Colonic mucosa (tissue), 4 donors: ENCODE measurements at regions of chr17 and their contacts with region 1.

Region 1: GRCh38 chr17:51914577-51914976 is 243.9 kb downstream of the CA10 start:
- DNase-seq: no peak
- H3K4me3 ChIP-seq: no peak overlapping the region
- H3K27ac ChIP-seq: no peak overlapping the region
- H3K4me1 ChIP-seq: no peaks in the 10 kb centered on the region
- H3K27me3 ChIP-seq: no peaks in the 10 kb centered on the region
- CTCF ChIP-seq: no peak

Region 2: GRCh38 chr17:51647826-51648225 is 266.8 kb before region 1 on chr17:
- intact Hi-C with region 1: no loop called
- DNase-seq: no peak
- H3K4me3 ChIP-seq: no peak overlapping the region
- H3K27ac ChIP-seq: no peak overlapping the region
- H3K4me1 ChIP-seq: no peaks in the 10 kb centered on the region
- H3K27me3 ChIP-seq: no peaks in the 10 kb centered on the region
- CTCF ChIP-seq: no peak

Region 3: DNA sequence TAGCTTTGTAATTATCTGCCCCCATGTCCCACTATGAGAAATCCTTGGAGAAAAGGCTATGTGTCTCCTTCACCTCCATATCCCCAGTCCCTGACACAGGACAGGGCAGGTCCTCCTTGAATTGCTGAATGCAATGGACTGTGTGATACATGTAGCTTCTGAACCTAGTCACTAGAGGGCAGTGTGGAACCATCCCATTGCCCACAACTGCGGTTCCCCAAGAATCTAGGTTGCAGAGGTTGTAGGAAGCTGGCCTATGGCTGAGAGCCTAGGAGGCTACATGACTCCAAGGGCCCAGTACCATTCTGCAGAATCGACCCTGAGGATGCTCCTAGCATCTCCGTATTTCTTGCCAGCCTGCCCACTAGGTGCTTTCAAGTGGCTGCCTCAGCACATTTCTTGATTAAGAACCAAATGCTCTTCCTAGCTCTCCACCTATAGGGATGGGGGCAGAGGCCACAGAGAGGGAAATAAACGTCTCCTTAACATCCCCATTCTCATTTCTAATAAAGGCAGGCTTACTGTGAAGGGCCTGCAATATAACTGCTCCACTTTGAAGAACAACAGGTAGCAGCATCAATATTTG is 150.1 kb before region 1 on chr17:
- intact Hi-C with region 1: no loop called
- DNase-seq: peak; percentile 46
- H3K4me3 ChIP-seq: no peak overlapping the region
- H3K27ac ChIP-seq: no peak overlapping the region
- H3K4me1 ChIP-seq: no peaks in the 10 kb centered on the region
- H3K27me3 ChIP-seq: no peaks in the 10 kb centered on the region
- CTCF ChIP-seq: peak; percentile 66

Region 4: GRCh38 chr17:51961689-51962088 is 47.1 kb after region 1 on chr17:
- intact Hi-C with region 1: loop called (anchors 5 kb)
- DNase-seq: no peak
- H3K4me3 ChIP-seq: no peak overlapping the region
- H3K27ac ChIP-seq: no peak overlapping the region
- H3K4me1 ChIP-seq: no peaks in the 10 kb centered on the region
- H3K27me3 ChIP-seq: no peaks in the 10 kb centered on the region
- CTCF ChIP-seq: no peak

Region 5: DNA sequence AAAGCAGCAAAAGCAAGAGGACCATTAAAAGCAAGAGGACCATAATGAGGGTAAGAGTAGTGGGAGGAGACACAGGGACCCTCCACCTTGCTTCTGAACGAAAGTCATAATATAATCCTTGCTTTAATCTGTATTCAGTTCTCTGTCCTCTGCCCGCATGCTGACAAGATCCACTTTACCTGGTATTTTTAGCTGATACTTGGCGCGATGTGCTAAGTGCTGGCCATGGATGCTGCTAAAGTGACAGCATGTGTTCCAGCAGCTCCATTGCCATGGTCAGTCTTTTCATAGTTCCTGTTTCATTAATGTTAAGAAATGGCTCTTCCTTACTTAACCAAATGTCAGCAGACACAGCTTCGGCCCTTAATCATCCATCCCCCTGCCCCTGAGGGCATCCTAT is 157.1 kb after region 1 on chr17:
- intact Hi-C with region 1: no loop called
- DNase-seq: no peak
- H3K4me3 ChIP-seq: no peak overlapping the region
- H3K27ac ChIP-seq: no peak overlapping the region
- H3K4me1 ChIP-seq: no peaks in the 10 kb centered on the region
- H3K27me3 ChIP-seq: no peaks in the 10 kb centered on the region
- CTCF ChIP-seq: no peak